CD14-positive monocyte (primary cell): ENCODE measurements at regions of chr21 and their contacts with region 1.

Region 1: DNA sequence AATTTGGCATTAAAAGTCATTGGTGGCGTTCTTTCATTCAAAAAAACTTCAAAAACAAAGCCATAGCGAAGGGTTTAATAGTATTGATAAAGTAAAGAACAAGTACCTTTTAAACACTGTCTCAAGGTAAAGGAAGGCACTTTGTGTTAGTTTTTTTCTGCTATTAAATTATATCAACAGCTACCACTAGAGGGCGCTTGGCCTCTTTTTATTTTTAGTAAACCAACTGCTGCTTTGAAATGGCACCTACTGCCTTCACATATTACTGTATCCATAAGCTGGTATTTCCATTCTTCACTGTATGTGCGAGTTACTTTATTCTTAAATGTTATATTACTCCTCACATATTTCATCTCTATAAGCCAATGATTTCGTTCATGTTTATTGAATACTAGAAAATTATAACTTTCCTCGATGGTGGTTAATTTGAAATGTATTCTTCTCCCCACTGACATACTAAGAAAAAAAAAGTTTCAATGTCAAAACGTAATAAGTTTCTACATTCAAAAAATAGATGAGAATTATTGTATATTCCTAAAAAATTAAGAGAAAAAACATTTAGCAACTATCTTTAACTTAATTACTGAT is 125.7 kb upstream of the CXADR start:
- DNase-seq: peak; percentile 18 to 58 (median 41)
- H3K4me3 ChIP-seq: no peak overlapping the region
- H3K4me3 Mint-ChIP-seq: no peak overlapping the region
- H3K27ac ChIP-seq: no peak overlapping the region
- H3K27ac Mint-ChIP-seq: no peak overlapping the region
- H3K4me1 ChIP-seq: peaks cover 3 to 10% of the 10 kb centered on the region in 2 donors
- H3K4me1 Mint-ChIP-seq: peaks cover 8% of the 10 kb centered on the region
- H3K27me3 ChIP-seq: no peaks in the 10 kb centered on the region
- H3K27me3 Mint-ChIP-seq: peaks cover 0 to 6% (median 3%) of the 10 kb centered on the region in 3 donors
- CTCF ChIP-seq: peak; percentile 83

Region 2: DNA sequence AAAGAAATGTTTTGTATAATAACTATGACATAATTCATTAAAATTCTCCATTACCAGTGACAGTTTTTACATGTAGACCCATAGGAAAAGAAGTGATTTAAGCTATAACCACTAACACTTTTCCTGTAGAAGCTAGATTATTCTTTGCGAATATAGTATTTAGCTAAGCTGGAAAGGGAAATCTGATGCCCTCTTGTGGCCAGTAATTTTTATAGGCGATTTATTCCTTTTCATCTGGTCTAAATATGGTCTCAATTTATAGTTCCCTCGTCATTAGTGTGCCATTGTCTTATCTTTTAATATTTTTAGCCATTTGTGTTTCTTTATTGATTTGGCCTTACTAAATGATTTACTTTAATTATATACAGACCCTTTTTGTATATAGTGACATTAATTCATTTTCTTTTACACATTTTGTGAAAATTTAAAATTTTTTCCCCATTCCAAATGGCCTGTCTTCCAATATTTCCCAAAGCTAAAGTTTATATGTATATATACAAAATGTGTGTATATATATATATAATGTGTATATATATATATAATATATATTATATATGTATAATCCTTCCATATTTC is 198.8 kb after region 1 on chr21:
- intact Hi-C with region 1: loop called (anchors 2 to 5 kb)
- DNase-seq: peak in 2 of 3 donors; percentile 24 to 48
- H3K4me3 ChIP-seq: no peak overlapping the region
- H3K4me3 Mint-ChIP-seq: no peak overlapping the region
- H3K27ac ChIP-seq: no peak overlapping the region
- H3K27ac Mint-ChIP-seq: no peak overlapping the region
- H3K4me1 ChIP-seq: no peaks in the 10 kb centered on the region
- H3K4me1 Mint-ChIP-seq: no peaks in the 10 kb centered on the region
- H3K27me3 ChIP-seq: no peaks in the 10 kb centered on the region
- H3K27me3 Mint-ChIP-seq: peaks cover 0 to 10% (median 0%) of the 10 kb centered on the region in 3 donors
- CTCF ChIP-seq: peak; percentile 74